H1 (cell line): ENCODE measurements at regions of chr1 and their contacts with region 1.

Region 1: DNA sequence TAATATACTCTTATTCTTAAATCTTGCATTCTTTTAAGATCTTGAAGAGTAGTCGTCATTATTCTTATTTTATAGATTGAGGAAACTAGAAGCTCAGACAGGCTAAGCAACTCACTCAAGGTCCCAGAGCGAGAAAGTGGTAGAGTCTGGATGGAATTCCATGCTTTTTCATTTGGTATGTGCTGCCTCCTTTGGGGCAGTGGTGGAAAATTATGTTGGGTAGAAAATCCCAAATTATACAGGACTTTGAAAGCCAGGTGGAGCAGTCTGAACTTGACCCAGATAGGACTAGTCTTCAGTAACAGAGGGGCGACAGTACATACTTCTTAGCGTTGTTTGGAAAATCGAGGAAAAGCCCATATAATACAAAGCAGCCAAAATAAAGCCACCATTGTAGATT is 205.6 kb downstream of the ATG4C start:
- DNase-seq: no peak
- H3K4me3 ChIP-seq: no peak overlapping the region
- H3K27ac ChIP-seq: no peak overlapping the region
- H3K4me1 ChIP-seq: peaks cover 0 to 3% (median 0%) of the 10 kb centered on the region in 4 experiments; a peak in 2 of 7 replicates
- H3K27me3 ChIP-seq: no peaks in the 10 kb centered on the region
- CTCF ChIP-seq: peak in 2 of 3 experiments; percentile 56 to 78; a peak in 3 of 4 replicates
- EP300 ChIP-seq: no peak
- POLR2A ChIP-seq: no peak
- RAD21 ChIP-seq: peak; percentile 63 to 68

Region 2: DNA sequence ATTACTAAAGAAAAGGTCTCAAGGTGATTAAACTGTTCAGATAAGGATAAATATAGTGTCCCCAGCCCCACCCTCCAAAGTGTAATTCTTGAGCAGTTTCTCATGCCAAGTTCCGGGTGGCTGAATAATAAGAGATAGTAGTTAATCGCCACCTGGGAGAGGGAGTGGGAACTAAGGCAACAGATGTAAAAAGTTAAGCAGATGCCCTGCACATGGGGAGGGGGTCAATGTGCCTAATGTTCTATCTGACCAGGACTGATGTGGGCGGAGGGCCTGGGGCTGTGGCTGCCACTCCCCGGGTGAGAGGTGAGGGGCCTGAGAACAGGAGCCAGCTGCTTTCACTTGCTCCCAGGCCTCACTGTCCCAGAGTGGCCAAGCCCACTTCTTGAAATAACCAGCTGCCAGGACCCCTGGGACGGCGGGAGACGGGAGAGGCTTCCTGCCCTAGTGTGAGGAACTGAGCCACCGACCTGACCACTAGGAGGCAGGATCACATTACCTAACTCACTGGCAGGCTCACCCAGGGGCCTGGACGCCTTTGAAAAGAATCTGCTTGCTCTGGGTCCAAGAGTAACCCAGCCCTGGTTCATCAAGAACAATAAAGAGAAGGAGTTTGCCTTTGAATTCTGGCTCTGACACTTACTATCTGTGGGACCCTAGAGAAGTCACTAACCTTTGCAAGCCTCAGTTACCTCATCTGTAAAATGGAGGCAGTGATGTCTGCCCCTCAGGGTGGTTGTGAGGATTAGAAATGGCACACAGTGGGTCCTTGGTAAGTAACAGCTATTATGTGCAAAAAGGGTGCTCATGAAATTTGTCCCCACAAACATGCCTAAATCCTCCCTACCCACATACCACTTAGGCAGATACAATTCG is 26.4 kb before region 1 on chr1:
- CTCF ChIA-PET with region 1: interaction called, 26 read pairs
- POLR2A ChIA-PET with region 1: no interaction called
- DNase-seq: peak; percentile 81 to 84
- H3K4me3 ChIP-seq: peak overlapping the region in 1 of 4 experiments; percentile 38; a peak in 1 of 8 replicates
- H3K27ac ChIP-seq: no peak overlapping the region
- H3K4me1 ChIP-seq: peaks cover 0 to 15% (median 4%) of the 10 kb centered on the region in 4 experiments; a peak in 6 of 7 replicates
- H3K27me3 ChIP-seq: peaks cover 0 to 2% (median 0%) of the 10 kb centered on the region in 4 experiments; a peak in 1 of 7 replicates
- CTCF ChIP-seq: peak; percentile 83 to 93 (median 88)
- EP300 ChIP-seq: no peak
- POLR2A ChIP-seq: no peak
- RAD21 ChIP-seq: peak; percentile 87 to 93

Region 3: GRCh38 chr1:62977366-62977765 is 12.1 kb before region 1 on chr1:
- CTCF ChIA-PET with region 1: interaction called, 11 read pairs
- POLR2A ChIA-PET with region 1: no interaction called
- DNase-seq: no peak
- H3K4me3 ChIP-seq: no peak overlapping the region
- H3K27ac ChIP-seq: no peak overlapping the region
- H3K4me1 ChIP-seq: peaks cover 0 to 3% (median 1%) of the 10 kb centered on the region in 4 experiments; a peak in 2 of 7 replicates
- H3K27me3 ChIP-seq: no peaks in the 10 kb centered on the region
- CTCF ChIP-seq: no peak
- EP300 ChIP-seq: no peak
- POLR2A ChIP-seq: no peak
- RAD21 ChIP-seq: no peak

Region 4: GRCh38 chr1:63004868-63005267 is 15.4 kb after region 1 on chr1:
- CTCF ChIA-PET with region 1: interaction called, 35 read pairs
- POLR2A ChIA-PET with region 1: no interaction called
- DNase-seq: no peak
- H3K4me3 ChIP-seq: no peak overlapping the region
- H3K27ac ChIP-seq: no peak overlapping the region
- H3K4me1 ChIP-seq: peaks cover 0 to 2% (median 0%) of the 10 kb centered on the region in 4 experiments; a peak in 2 of 7 replicates
- H3K27me3 ChIP-seq: no peaks in the 10 kb centered on the region
- CTCF ChIP-seq: peak in 2 of 3 experiments; percentile 71 to 77; a peak in 3 of 4 replicates
- EP300 ChIP-seq: no peak
- POLR2A ChIP-seq: no peak
- RAD21 ChIP-seq: peak; percentile 94 to 95

Region 5: GRCh38 chr1:63042278-63042677 is 52.8 kb after region 1 on chr1:
- CTCF ChIA-PET with region 1: no interaction called
- POLR2A ChIA-PET with region 1: no interaction called
- DNase-seq: no peak
- H3K4me3 ChIP-seq: no peak overlapping the region
- H3K27ac ChIP-seq: no peak overlapping the region
- H3K4me1 ChIP-seq: peaks cover 0 to 5% (median 1%) of the 10 kb centered on the region in 4 experiments; a peak in 4 of 7 replicates
- H3K27me3 ChIP-seq: no peaks in the 10 kb centered on the region; a peak in 1 of 7 replicates
- CTCF ChIP-seq: no peak
- EP300 ChIP-seq: no peak
- POLR2A ChIP-seq: no peak
- RAD21 ChIP-seq: no peak

Region 6: DNA sequence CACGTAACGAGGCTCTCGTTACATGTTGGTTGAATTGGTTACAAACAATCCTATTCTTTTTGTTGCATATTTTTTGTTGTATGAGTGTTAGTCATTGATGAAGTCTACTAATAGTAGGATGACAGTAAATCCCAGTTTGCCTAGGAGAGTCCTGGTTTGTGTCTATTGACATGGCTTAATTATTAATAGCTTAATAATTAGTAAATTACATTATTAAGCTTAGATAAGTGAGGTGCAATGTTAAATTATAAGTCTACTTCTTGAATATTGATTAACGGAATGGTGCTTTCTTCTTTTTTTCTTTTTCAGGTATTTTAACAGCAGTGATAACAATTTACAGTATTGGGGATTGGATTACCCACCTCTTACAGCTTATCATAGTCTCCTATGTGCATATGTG is 412.4 kb after region 1 on chr1:
- CTCF ChIA-PET with region 1: no interaction called
- POLR2A ChIA-PET with region 1: no interaction called
- DNase-seq: no peak
- H3K4me3 ChIP-seq: no peak overlapping the region
- H3K27ac ChIP-seq: no peak overlapping the region
- H3K4me1 ChIP-seq: no peaks in the 10 kb centered on the region
- H3K27me3 ChIP-seq: no peaks in the 10 kb centered on the region
- CTCF ChIP-seq: no peak
- EP300 ChIP-seq: no peak
- POLR2A ChIP-seq: no peak
- RAD21 ChIP-seq: no peak